CD4-positive, alpha-beta memory T cell (primary cell): ENCODE measurements at regions of chr3 and their contacts with region 1.

Region 1: DNA sequence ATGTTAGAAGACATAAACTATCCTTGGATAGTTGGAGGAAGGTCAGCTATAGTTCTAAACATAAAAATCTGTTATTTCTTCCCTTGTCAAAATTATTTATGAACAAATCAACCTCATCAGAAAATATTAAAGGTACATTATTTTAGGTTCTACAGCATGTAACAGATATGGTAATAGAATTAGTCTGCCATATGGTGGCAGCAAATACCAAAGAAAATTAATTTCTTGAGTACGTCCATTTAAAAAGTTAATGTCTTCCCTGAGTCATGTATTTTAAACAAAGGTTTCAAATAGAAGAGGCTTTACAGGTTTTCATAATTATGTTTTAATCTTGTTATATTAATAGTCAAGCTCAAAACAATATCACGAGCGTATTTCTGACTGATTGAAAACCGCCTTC is 17.9 kb upstream of the ANKRD28 start:
- DNase-seq: peak in 3 of 5 donors; percentile 34 to 42 (median 36)
- H3K4me3 ChIP-seq: no peak overlapping the region
- H3K4me3 Mint-ChIP-seq: no peak overlapping the region
- H3K27ac ChIP-seq: no peak overlapping the region
- H3K27ac Mint-ChIP-seq: no peak overlapping the region
- H3K4me1 ChIP-seq: peaks cover 29% of the 10 kb centered on the region
- H3K4me1 Mint-ChIP-seq: peaks cover 22 to 55% (median 27%) of the 10 kb centered on the region in 4 donors
- H3K27me3 ChIP-seq: no peaks in the 10 kb centered on the region
- H3K27me3 Mint-ChIP-seq: no peaks in the 10 kb centered on the region

Region 2: GRCh38 chr3:15731024-15731423 is 84.7 kb before region 1 on chr3:
- CTCF ChIA-PET with region 1: no interaction called
- POLR2A ChIA-PET with region 1: no interaction called
- intact Hi-C with region 1: no loop called
- DNase-seq: no peak
- H3K4me3 ChIP-seq: no peak overlapping the region
- H3K4me3 Mint-ChIP-seq: no peak overlapping the region
- H3K27ac ChIP-seq: no peak overlapping the region
- H3K27ac Mint-ChIP-seq: no peak overlapping the region
- H3K4me1 ChIP-seq: no peaks in the 10 kb centered on the region
- H3K4me1 Mint-ChIP-seq: peaks cover 3 to 12% (median 8%) of the 10 kb centered on the region in 4 donors
- H3K27me3 ChIP-seq: no peaks in the 10 kb centered on the region
- H3K27me3 Mint-ChIP-seq: no peaks in the 10 kb centered on the region

Region 3: GRCh38 chr3:15797642-15798303 is 17.9 kb before region 1 on chr3 and contains the start of gene ANKRD28:
- CTCF ChIA-PET with region 1: interaction called, 90 read pairs
- POLR2A ChIA-PET with region 1: interaction called, 12 read pairs
- intact Hi-C with region 1: no loop called
- DNase-seq: peak in 4 of 5 donors; percentile 45 to 61 (median 52)
- H3K4me3 ChIP-seq: peak within 1 kb of the TSS; percentile 35 to 38
- H3K4me3 Mint-ChIP-seq: peak within 1 kb of the TSS; percentile 81 to 93 (median 91)
- H3K27ac ChIP-seq: peak within 1 kb of the TSS; percentile 72
- H3K27ac Mint-ChIP-seq: peak within 1 kb of the TSS; percentile 88 to 98 (median 95)
- H3K4me1 ChIP-seq: peaks cover 86% of the 10 kb centered on the region
- H3K4me1 Mint-ChIP-seq: peaks cover 49 to 92% (median 67%) of the 10 kb centered on the region in 4 donors
- H3K27me3 ChIP-seq: no peaks in the 10 kb centered on the region
- H3K27me3 Mint-ChIP-seq: no peaks in the 10 kb centered on the region
- total RNA-seq, gene ANKRD28: 35.9 to 42.0 TPM

Region 4: DNA sequence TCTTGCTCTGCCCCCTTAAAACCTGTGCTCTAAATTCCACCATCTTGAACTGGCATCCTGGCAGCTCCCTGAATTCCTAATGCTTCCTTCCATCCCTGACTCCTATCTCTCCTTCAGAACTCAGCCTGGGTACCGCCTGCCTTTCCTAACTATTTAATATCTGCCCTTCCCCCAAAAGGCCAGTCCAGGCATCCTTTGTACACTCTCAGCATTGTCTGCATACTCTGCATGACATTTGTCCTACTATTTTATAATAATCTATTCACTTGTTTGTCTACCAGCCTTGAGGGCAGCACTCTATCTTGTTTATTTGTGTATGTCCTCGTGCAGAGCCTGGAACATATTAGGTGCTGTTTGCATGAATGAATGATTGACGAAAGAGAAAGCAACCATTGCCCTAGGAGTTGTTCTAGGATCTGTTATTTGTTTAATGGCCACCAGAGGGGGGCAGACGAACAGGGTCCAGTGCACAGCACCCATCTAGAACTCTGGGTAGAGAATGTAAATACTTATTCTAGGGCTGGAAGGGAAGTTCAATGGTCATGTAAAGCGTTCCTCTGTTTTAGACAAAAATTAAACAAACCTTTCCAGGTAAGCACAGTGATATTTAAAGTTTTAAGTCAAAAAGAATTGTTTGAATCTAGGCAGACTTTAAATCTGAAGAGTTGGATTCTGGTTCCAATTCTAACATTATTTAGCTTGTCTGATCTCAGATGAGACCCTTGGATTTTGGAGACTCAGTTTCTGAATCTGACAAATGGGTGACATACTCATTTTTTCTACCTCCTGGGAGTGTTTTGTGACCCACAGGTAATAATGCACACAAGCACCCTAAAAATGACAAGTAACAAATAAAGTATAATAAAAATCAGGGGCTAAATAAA is 233.0 kb after region 1 on chr3:
- CTCF ChIA-PET with region 1: interaction called, 3 read pairs
- POLR2A ChIA-PET with region 1: no interaction called
- intact Hi-C with region 1: loop called (anchors 1 kb)
- DNase-seq: peak in 4 of 5 donors; percentile 34 to 48 (median 41)
- H3K4me3 ChIP-seq: no peak overlapping the region
- H3K4me3 Mint-ChIP-seq: peak overlapping the region in 4 of 8 donors; percentile 41 to 75 (median 66)
- H3K27ac ChIP-seq: no peak overlapping the region
- H3K27ac Mint-ChIP-seq: no peak overlapping the region
- H3K4me1 ChIP-seq: no peaks in the 10 kb centered on the region
- H3K4me1 Mint-ChIP-seq: peaks cover 0 to 5% (median 2%) of the 10 kb centered on the region in 4 donors
- H3K27me3 ChIP-seq: no peaks in the 10 kb centered on the region
- H3K27me3 Mint-ChIP-seq: peaks cover 3% of the 10 kb centered on the region in 2 donors

Region 5: DNA sequence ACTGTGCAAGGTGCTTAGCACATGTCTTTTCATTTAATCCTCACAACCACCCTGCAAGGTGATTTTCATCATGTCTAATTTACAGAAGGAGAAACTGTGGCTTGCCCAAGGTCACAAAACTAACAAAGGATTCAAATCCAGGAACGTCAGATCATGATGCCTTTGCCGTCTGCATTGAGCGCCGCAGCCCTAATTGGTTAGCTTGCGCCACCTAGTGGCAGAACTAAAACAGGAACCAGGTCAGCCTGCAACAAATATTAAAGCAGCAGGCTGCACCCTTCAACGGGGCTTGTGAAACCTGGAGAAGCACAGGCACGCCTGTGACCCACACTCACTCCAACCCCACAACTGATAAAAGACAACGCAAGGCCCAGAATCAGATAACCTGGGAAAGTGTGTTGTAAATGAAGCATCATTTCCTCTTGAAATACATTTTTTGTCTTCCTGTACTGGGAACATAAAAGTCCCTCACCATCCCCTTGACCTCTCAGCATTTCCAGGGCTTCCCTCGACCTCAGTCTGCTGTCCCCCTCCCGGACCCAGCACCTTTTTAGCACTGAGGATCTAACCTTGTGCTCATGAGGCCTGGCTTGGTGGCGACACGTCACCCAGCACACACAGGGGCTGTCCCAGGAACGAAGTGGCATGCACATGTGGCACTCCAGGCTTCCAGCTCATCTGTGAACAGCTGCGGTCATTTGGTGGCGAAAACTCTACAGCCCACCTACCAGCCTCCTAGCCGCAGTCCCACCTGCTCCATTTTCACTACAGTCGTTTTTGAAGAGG is 431.8 kb after region 1 on chr3:
- CTCF ChIA-PET with region 1: interaction called, 11 read pairs
- POLR2A ChIA-PET with region 1: no interaction called
- intact Hi-C with region 1: loop called (anchors 1 kb)
- DNase-seq: peak; percentile 73 to 78 (median 75)
- H3K4me3 ChIP-seq: no peak overlapping the region
- H3K4me3 Mint-ChIP-seq: peak overlapping the region in 5 of 8 donors; percentile 10 to 57 (median 38)
- H3K27ac ChIP-seq: no peak overlapping the region
- H3K27ac Mint-ChIP-seq: peak overlapping the region in 1 of 7 donors; percentile 32
- H3K4me1 ChIP-seq: peaks cover 3% of the 10 kb centered on the region
- H3K4me1 Mint-ChIP-seq: peaks cover 6 to 17% (median 9%) of the 10 kb centered on the region in 4 donors
- H3K27me3 ChIP-seq: no peaks in the 10 kb centered on the region
- H3K27me3 Mint-ChIP-seq: no peaks in the 10 kb centered on the region